ENCODE measurements at regions of chrX and their contacts with region 1.

Region 1: DNA sequence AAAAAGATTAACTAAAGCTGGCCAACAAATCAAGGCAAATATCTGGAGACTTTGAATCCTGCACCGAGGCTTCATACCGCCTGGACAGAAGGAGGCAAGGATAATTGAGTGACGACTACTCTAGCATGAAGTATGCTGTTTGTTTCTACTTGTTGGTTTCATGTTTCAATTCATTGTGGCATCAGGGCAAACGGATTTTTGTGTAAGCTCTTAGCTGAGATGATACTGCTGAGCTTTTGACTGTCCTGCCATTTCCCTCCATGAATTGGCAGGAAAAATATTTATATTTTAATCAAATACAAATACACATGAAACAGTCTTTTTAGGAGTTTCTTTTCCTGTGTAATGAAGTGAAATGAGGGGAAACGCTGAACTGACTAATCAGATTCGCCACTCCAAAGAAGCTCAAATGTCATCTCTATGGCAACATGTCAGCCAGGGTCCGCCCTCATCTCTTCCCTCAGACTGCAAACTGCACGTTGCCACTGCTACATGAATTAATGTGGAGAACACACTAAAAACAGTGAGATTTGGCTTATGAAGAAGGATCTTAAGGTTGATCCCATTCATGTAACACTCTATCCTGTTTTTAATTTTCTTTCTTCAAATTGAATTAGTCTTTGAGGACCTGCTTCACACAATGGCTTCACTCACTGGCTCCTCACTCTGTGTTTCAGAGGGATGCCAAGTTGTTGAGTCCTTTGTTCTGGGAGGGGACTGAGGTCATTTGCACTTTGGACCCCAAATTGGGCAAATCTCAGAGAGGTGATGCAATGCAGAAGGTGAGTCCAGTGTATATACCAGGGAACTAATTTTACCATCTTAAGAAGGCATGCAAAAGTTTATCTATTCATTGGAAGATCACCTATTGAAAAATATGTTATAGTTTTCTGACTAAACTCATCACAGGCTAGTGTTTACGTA is 149.6 kb upstream of the MID1 start:
- DNase-seq: peak; percentile 33 to 34
- H3K4me3 ChIP-seq: no peak overlapping the region
- H3K4me3 Mint-ChIP-seq: no peak overlapping the region
- H3K27ac Mint-ChIP-seq: no peak overlapping the region
- H3K4me1 ChIP-seq: peaks cover 12% of the 10 kb centered on the region
- H3K4me1 Mint-ChIP-seq: peaks cover 7% of the 10 kb centered on the region
- H3K27me3 ChIP-seq: no peaks in the 10 kb centered on the region
- H3K27me3 Mint-ChIP-seq: no peaks in the 10 kb centered on the region
- CTCF ChIP-seq: no peak

Region 2: GRCh38 chrX:10744007-10744406 is 26.0 kb before region 1 on chrX:
- CTCF ChIA-PET with region 1: no interaction called
- POLR2A ChIA-PET with region 1: no interaction called
- intact Hi-C with region 1: no loop called
- DNase-seq: peak in 1 of 2 experiments; percentile 25
- H3K4me3 ChIP-seq: no peak overlapping the region
- H3K4me3 Mint-ChIP-seq: no peak overlapping the region
- H3K27ac Mint-ChIP-seq: no peak overlapping the region
- H3K4me1 ChIP-seq: no peaks in the 10 kb centered on the region
- H3K4me1 Mint-ChIP-seq: peaks cover 11% of the 10 kb centered on the region
- H3K27me3 ChIP-seq: no peaks in the 10 kb centered on the region
- H3K27me3 Mint-ChIP-seq: no peaks in the 10 kb centered on the region
- CTCF ChIP-seq: no peak

Region 3: DNA sequence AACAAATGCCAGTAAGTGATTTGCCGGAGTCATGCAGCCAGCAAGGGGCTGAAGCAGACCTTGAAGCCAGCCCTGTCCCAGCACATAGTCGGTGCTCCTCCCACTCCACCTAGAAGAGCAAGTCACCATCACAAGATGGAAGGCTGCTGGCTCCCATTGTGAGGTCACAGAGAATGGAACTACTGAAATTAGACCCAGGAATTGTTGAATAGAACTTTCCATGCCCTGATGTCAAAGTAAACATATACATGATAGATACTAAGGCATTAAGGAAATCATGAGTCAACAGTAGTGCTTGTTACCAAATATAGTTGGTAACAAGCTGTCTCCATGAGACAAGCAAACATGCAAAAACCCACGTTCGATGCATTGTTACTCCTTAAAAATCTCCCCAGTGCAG is 27.5 kb after region 1 on chrX:
- CTCF ChIA-PET with region 1: no interaction called
- POLR2A ChIA-PET with region 1: no interaction called
- intact Hi-C with region 1: loop called (anchors 2 kb)
- DNase-seq: no peak
- H3K4me3 ChIP-seq: no peak overlapping the region
- H3K4me3 Mint-ChIP-seq: no peak overlapping the region
- H3K27ac Mint-ChIP-seq: no peak overlapping the region
- H3K4me1 ChIP-seq: peaks cover 4% of the 10 kb centered on the region; the same call in 1 of the 2 replicates
- H3K4me1 Mint-ChIP-seq: peaks cover 13% of the 10 kb centered on the region
- H3K27me3 ChIP-seq: no peaks in the 10 kb centered on the region
- H3K27me3 Mint-ChIP-seq: no peaks in the 10 kb centered on the region
- CTCF ChIP-seq: no peak